ENCODE measurements at regions of chr6 and their contacts with region 1.

Region 1: GRCh38 chr6:138161338-138162110 is at the start of gene ARFGEF3:
- DNase-seq: peak; percentile 55 to 94 (median 66)

Region 2: GRCh38 chr6:137389150-137389704 is 772.3 kb before region 1 on chr6:
- intact Hi-C with region 1: no loop called
- DNase-seq: no peak

Region 3: DNA sequence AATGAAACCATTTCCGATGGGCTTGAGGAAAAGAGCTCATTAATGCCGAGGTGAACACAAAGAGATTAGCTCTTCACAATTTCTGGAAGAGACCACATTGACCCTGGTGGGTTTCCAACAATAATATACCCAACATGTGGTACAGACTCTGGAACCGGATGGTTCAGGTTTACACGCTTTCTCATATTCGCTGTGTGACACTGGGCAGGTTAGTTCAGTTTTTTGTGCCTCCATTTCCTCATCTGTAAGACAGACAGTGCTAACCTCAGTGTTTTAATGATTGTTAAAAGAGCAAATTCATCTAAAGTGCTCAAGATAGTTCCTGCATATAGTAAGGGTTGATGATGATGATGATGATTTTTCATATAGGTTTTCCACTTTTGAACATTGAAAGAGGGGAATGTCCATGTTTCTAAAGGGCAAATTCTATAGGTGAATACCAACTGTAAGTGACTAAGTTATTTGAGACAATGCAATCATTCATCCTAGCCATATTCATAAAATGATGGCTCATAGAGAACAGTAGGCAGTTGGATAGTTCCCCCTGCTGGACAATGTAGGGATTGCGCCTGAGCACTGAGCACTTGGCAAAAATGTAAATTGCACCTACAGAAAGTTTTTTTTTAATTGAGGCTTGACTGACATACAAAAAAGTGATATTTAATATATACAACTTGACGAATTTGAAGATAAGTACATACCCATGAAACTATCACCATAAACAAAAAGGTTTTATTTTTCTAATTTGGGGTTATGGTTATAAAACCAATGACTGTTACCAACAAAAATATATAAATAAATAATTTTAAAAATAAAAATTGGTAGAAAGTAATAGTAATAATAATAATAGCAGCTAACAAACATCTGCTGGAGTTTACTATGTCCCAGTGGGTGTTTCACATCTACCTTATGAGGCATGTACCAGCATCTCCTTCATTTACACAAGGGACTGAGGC is 52.2 kb before region 1 on chr6:
- intact Hi-C with region 1: no loop called
- DNase-seq: peak in 9 of 10 donors; percentile 34 to 90 (median 75)

Region 4: DNA sequence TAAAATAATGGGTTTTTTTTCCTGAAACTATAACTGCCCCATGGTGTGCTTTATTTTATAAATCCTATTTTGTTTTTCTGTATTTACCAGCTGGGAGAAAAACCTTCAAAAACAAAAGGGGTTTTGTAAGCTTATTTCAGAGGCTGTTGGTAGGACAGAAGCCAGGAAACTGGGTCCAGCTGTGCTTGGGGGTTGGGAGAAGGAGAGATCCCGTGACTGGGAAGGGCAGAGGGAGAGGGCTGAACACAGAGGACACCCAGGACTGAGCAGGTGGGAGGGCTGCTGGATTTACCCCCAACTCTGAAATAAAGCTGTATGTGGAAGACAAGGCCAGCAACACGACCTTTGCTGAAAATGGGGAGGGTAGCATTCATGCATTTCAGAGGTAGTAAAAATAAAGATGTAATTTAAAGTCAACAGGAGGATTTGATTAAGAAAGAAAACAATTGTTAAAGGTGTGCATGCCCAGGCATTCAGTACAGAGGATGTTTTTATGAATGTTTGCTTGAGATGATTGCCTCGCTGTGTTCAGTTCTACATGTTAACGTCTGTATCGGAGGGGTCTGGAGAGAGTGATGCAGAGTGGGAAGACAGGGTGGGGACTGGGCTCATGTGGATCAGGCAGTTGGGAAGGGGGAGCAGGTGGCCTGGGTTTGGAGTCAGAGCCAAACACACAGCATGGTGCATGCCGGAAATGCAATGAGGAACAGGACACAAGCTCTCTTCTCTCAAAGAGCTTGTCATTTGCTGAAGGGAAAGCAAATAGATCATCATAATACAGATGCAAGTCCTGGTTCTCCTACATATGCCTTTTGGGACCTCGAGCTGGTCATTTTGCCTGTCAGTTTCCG is 21.6 kb after region 1 on chr6:
- intact Hi-C with region 1: loop called (anchors 1 kb)
- DNase-seq: peak; percentile 62 to 96 (median 79)

Region 5: DNA sequence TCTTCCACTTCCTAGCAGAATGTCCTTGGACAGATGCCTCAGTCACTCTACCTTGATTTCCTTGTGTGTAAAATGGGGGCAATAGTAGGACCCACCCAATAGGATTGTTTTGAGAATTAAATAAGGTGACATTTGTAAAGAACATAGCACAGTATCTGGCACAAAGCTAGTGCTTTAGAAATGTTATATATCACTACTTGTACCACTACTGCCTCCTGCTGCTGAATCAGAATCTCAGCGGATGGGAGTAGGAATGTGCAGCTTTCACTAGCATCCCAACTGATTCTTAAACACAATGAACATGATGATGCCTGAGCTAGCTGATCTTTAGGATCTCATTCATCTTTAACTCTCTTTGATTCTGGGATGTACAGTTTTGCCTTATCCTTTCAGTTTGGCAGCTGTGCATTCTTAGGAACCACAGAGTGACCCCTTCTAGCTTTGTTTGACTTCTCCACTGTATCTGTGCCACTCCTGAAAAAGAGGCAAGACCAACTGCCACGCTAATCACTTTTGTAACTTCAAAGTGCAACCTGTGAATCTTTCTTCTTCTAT is 49.6 kb after region 1 on chr6:
- intact Hi-C with region 1: loop called (anchors 1 kb)
- DNase-seq: peak in 1 of 10 donors; percentile 47

Region 6: DNA sequence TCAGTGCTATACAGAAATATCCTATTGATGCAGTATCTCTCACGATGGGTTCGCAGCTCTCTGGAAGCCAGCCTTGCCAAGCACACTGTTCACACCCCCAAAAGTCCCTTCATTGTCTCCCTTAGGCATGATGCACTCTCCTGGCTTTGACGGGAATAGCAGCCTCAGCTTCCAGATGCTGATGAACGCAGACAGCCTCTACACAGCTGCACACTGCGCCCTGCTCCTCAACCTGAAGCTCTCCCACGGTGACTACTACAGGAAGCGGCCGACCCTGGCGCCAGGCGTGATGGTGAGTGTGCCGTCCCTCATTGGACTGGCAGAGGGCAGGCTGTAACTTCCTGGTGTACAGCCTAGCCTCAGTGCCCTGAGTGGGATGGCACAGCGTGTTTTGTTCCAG is 116.8 kb after region 1 on chr6:
- intact Hi-C with region 1: loop called (anchors 5 kb)
- DNase-seq: peak in 8 of 10 donors; percentile 40 to 94 (median 67)

Measured in posterior cingulate gyrus (tissue), 11 donors.